HepG2 (cell line): ENCODE measurements at regions of chr5 and their contacts with region 1.

Region 1: GRCh38 chr5:150544611-150545219 is 36.8 kb downstream of the NDST1 start:
- DNase-seq: peak; percentile 80
- ATAC-seq: peak; percentile 71
- H3K4me3 ChIP-seq: no peak overlapping the region; a peak in 1 of 6 replicates
- H3K27ac ChIP-seq: peak overlapping the region; percentile 89
- H3K4me1 ChIP-seq: peaks cover 54% of the 10 kb centered on the region
- H3K27me3 ChIP-seq: no peaks in the 10 kb centered on the region
- CTCF ChIP-seq: peak; percentile 98
- EP300 ChIP-seq: 0 out of 4 replicates have a peak, but pooled peaks of 1 of the 2 experiments have one; percentile 40
- POLR2A ChIP-seq: peak in 1 of 2 experiments; percentile 31; a peak in 1 of 4 replicates
- RAD21 ChIP-seq: peak; percentile 95

Region 2: DNA sequence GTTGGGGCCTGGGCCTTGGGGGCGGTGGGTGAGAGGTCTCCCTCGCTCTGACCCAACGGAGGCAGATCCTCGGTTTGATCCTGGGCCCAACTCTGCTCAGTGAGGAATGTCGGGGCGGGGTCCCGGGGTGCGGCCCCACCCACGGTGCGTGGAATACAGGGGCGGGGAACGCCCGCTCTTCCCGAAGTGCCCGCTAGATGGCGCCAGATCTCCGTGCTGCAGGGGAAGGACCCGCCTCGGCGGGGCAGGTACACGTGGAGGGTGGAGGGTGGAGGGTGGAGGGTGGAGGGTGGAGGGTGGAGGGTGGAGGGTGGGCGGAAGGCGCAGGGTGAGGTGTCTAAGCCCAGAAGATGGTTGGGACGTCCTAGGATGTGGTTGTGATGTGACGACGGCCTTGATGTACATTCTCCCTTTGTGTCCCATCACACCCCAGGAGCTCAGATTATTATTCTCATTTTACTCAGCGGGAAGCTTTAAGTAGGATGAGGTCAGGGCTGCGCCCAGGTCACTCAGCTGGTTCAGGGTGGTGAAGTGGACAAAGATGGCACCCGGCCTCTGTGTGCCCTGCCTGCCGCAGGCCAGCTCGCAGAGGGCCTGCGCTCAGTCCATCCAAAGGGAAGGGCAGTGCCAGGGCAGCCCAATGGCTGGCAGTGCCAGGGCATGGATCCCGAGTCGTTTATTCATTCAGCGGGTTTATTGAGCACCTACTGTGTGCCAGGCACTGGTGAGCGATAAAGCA is 85.7 kb before region 1 on chr5:
- CTCF ChIA-PET with region 1: interaction called, 51 read pairs
- POLR2A ChIA-PET with region 1: interaction called, 11 read pairs
- in situ Hi-C with region 1: loop called (anchors 10 kb)
- intact Hi-C with region 1: loop called (anchors 1 kb)
- DNase-seq: peak; percentile 44
- ATAC-seq: peak; percentile 86
- H3K4me3 ChIP-seq: peak overlapping the region in 2 of 3 experiments; percentile 42 to 62; a peak in 4 of 6 replicates
- H3K27ac ChIP-seq: no peak overlapping the region
- H3K4me1 ChIP-seq: peaks cover 47% of the 10 kb centered on the region
- H3K27me3 ChIP-seq: peaks cover 2 to 7% of the 10 kb centered on the region in 2 experiments; a peak in 1 of 5 replicates
- CTCF ChIP-seq: peak; percentile 92
- EP300 ChIP-seq: no peak
- POLR2A ChIP-seq: no peak
- RAD21 ChIP-seq: peak; percentile 84

Region 3: GRCh38 chr5:150486402-150487198 is 58.1 kb before region 1 on chr5:
- CTCF ChIA-PET with region 1: interaction called, 11 read pairs
- POLR2A ChIA-PET with region 1: interaction called, 33 read pairs
- in situ Hi-C with region 1: no loop called
- intact Hi-C with region 1: loop called (anchors 1 kb)
- DNase-seq: peak; percentile 71
- ATAC-seq: peak; percentile 39
- H3K4me3 ChIP-seq: peak overlapping the region; percentile 88 to 94 (median 91)
- H3K27ac ChIP-seq: peak overlapping the region; percentile 96
- H3K4me1 ChIP-seq: peaks cover 81% of the 10 kb centered on the region
- H3K27me3 ChIP-seq: peaks cover 2 to 8% of the 10 kb centered on the region in 2 experiments; a peak in 2 of 5 replicates
- CTCF ChIP-seq: peak; percentile 22
- EP300 ChIP-seq: no peak
- POLR2A ChIP-seq: peak; percentile 20 to 34; a peak in 1 of 4 replicates
- RAD21 ChIP-seq: peak; percentile 39; the same call in 1 of the 2 replicates

Region 4: DNA sequence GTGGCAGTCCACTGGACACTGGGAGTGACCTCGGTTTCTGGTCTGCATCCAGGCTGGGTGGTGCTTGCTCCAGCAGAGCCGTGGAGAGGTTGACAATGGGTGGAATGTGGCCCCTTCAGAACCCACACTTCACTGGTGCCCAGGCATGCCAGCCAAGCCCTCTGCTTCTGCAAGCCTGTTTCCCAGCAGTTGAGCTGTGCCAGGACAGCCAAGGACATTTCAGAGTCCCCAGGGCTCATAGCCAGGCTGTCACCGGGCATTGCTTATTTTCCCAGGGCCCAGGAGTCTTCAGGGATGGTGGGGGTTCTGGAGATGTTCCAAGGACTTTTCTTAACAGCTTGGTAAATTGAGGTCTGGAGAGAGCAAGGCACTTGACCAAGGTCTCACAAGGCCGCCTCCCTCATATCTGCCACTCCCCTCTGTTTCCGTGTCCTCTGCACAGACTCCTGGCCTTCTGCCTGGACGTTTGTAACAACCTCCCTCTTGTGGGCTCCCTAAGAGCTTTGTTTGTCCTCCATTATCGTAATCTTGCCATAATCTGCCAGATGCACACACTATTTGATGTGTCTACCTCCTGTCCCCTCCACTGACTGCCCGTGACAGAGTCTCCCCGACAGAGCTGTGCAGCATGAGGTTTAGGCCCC is 40.6 kb before region 1 on chr5:
- CTCF ChIA-PET with region 1: interaction called, 4 read pairs
- POLR2A ChIA-PET with region 1: interaction called, 6 read pairs
- in situ Hi-C with region 1: no loop called
- intact Hi-C with region 1: loop called (anchors 5 kb)
- DNase-seq: peak; percentile 67
- ATAC-seq: peak; percentile 42
- H3K4me3 ChIP-seq: no peak overlapping the region
- H3K27ac ChIP-seq: peak overlapping the region; percentile 12
- H3K4me1 ChIP-seq: peaks cover 99% of the 10 kb centered on the region
- H3K27me3 ChIP-seq: no peaks in the 10 kb centered on the region
- CTCF ChIP-seq: no peak
- EP300 ChIP-seq: no peak
- POLR2A ChIP-seq: no peak
- RAD21 ChIP-seq: no peak

Region 5: DNA sequence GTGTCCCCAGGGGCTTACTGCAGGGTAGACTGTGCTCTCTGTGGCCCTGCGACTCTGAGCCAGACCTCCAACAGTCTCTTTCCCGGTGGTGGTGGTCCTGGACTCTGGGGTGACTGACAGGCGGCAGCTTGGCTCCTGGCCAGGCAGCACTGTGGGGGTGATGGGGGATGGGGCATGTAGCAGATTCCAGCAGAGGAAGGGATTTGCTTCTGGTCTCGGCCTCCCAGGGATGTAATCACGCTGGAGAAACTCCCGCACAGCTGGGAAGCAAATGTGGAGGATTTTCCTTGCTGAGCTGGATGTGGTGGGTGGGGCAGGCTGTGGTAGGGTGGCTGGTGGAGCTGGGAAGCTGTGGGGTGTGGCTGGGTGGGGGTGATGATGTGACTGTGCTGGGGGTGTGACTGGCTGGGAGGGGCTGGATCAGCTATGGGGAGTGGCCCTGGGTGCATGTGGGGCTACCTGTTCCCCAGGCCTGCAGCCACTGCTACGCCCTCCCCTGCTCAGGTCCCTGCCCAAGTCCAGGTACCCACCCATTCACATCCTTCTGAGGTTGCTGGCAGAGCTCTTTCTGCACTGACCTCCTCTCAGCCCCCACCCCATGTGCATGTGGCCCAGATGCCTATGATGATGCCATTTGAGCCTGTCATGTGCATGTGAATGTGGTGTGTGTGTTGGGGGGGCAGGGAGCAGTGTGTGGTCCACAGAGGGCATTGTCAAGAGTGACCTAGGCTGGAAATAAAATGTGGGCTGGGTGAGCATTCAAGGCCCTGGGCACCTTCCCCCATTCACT is 32.9 kb before region 1 on chr5:
- CTCF ChIA-PET with region 1: no interaction called
- POLR2A ChIA-PET with region 1: interaction called, 10 read pairs
- in situ Hi-C with region 1: no loop called
- intact Hi-C with region 1: no loop called
- DNase-seq: no peak
- ATAC-seq: no peak
- H3K4me3 ChIP-seq: peak overlapping the region in 1 of 3 experiments; percentile 12; a peak in 1 of 6 replicates
- H3K27ac ChIP-seq: peak overlapping the region; percentile 77
- H3K4me1 ChIP-seq: peaks cover 98% of the 10 kb centered on the region
- H3K27me3 ChIP-seq: no peaks in the 10 kb centered on the region
- CTCF ChIP-seq: no peak
- EP300 ChIP-seq: no peak
- POLR2A ChIP-seq: no peak
- RAD21 ChIP-seq: no peak

Region 6: DNA sequence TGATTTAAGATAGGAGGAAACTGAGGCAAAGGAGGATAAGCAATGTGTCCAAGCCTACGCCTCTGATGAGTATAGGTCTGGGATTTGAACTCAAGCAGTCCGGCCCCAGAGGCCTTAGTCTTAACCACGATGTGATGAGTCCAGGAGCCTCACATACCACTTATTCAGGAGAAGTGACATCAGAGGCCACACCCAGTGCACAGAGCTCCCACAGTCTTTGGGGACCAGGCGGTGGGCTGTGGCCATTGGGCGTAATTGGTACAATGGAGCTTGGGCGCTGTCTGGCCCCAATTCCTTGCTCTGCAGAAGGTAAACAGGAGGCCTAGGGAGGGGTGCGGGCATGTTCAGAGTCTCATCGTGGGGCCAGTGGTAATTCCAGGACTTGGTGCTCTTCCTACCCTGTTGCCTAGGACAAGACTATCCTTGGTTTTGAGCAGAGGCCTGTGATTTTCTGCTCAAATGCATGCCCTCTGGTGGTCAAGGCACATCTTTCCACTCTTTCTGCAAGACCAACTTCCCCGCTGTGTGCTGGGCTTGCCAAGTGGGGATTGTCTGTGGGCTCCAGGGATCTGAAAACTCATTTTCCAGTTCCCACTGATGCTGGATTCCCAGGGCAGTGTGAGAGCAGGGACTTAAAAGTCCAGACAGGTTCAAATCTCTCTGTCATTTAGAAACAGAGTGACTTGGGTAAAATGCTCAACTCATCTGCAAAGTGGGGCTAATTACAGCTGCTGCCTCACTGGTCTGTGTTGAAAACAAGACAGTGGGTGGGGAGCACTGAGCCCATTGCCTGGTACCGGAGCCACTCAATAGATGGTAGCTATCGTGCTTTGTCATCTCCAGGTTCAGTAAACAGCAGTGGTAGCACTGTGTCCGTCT is 21.0 kb before region 1 on chr5:
- CTCF ChIA-PET with region 1: interaction called, 13 read pairs
- POLR2A ChIA-PET with region 1: interaction called, 86 read pairs
- in situ Hi-C with region 1: no loop called
- intact Hi-C with region 1: loop called (anchors 2 kb)
- DNase-seq: peak; percentile 73
- ATAC-seq: peak; percentile 28
- H3K4me3 ChIP-seq: no peak overlapping the region
- H3K27ac ChIP-seq: peak overlapping the region; percentile 84
- H3K4me1 ChIP-seq: peaks cover 77% of the 10 kb centered on the region
- H3K27me3 ChIP-seq: no peaks in the 10 kb centered on the region
- CTCF ChIP-seq: peak; percentile 69
- EP300 ChIP-seq: no peak
- POLR2A ChIP-seq: no peak
- RAD21 ChIP-seq: peak; percentile 74

Region 7: DNA sequence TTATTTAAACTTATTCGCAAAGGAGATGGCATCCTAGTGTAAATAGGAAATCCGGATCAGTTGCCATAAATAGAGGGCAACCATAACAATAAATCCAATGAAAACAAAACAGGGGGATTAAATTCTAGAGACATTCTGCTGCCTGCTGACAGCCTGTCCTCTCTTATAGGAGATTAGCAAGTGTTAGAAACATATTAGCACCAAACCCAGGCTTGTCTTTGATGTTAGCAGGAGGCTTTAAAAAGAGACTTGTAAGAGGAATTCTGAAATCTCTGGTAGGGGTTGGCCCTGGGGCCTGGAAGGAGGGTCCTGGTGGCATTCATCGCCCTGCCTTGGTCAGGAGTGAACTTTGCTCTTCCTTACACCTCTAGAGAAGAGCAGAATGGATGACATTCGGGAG is 15.2 kb before region 1 on chr5:
- CTCF ChIA-PET with region 1: interaction called, 3 read pairs
- POLR2A ChIA-PET with region 1: interaction called, 86 read pairs
- in situ Hi-C with region 1: no loop called
- intact Hi-C with region 1: no loop called
- DNase-seq: no peak
- ATAC-seq: no peak
- H3K4me3 ChIP-seq: no peak overlapping the region
- H3K27ac ChIP-seq: peak overlapping the region; percentile 17
- H3K4me1 ChIP-seq: peaks cover 31% of the 10 kb centered on the region
- H3K27me3 ChIP-seq: no peaks in the 10 kb centered on the region
- CTCF ChIP-seq: no peak
- EP300 ChIP-seq: no peak
- POLR2A ChIP-seq: no peak
- RAD21 ChIP-seq: no peak